ENCODE measurements at regions of chr9 and their contacts with region 1.

Region 1: DNA sequence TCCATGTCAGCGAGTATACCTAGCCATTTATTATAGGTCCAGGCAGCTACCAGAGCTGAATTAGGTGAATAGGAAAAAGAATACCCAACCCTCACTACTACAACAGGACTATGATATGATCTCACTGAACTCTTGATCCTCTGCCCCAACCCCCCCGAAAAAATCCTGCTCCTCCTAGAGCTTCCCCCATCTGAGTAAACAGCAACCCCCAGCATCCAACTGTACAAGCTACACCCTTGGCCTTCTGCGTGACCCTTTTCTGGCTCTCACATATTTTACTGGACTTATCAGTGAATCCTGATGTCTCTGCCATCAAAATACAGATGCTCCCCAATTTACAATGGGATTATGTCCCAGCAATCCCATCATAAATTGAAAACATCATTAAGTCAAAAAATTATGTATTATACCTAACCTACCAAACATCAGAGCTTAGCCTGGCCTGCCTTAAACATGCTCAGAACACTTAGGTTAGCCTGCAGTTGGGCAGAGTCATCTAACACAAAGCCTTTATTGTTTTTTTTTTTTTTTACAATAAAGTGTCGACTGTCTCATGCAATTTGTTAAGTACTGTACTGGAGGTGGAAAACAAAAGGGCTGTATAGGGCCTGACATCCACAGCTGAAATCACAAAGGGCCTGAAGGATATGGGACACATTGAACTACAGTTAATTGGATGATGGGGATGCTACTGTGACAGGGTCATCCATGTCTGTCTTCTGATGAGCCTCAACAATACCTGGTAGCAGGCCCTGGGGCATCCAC is 128.9 kb upstream of the ERCC6L2 start:
- DNase-seq: no peak
- H3K4me3 ChIP-seq: no peak overlapping the region
- H3K27ac ChIP-seq: no peak overlapping the region
- H3K4me1 ChIP-seq: peaks cover 0 to 1% (median 0%) of the 10 kb centered on the region in 4 experiments; a peak in 1 of 7 replicates
- H3K27me3 ChIP-seq: no peaks in the 10 kb centered on the region; a peak in 1 of 7 replicates
- CTCF ChIP-seq: no peak
- EP300 ChIP-seq: no peak
- POLR2A ChIP-seq: no peak
- RAD21 ChIP-seq: no peak

Region 2: DNA sequence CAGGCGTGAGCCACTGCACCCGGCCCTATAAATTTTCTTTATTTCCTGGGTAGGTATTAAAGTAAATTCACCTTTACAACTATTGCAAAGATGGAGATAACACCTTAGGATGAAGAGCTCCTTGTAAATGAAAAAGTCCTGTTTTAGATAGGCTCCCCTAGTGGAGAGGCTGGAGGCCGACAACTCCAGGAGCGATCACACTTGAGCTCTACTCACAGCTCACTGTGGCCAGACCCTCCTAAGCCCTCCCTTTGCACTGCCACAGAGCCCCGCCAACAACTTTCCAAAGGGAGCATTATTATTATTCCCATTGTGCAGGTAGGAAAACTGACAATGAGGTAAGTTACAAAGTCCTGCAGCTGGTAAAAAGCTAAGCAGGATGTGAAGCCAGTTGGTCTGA is 10.2 kb before region 1 on chr9:
- CTCF ChIA-PET with region 1: interaction called, 16 read pairs
- POLR2A ChIA-PET with region 1: no interaction called
- DNase-seq: no peak
- H3K4me3 ChIP-seq: no peak overlapping the region
- H3K27ac ChIP-seq: no peak overlapping the region
- H3K4me1 ChIP-seq: peaks cover 0 to 3% (median 0%) of the 10 kb centered on the region in 4 experiments; a peak in 2 of 7 replicates
- H3K27me3 ChIP-seq: no peaks in the 10 kb centered on the region
- CTCF ChIP-seq: peak; percentile 51 to 74 (median 55)
- EP300 ChIP-seq: no peak
- POLR2A ChIP-seq: no peak
- RAD21 ChIP-seq: peak; percentile 36 to 60